H1 (cell line): ENCODE measurements at regions of chr20 and their contacts with region 1.

Region 1: GRCh38 chr20:53208110-53208832 is 236.1 kb downstream of the TSHZ2 start:
- DNase-seq: peak in 1 of 2 experiments; percentile 84
- H3K4me3 ChIP-seq: no peak overlapping the region
- H3K27ac ChIP-seq: no peak overlapping the region
- H3K4me1 ChIP-seq: peaks cover 0 to 14% (median 5%) of the 10 kb centered on the region in 4 experiments; a peak in 6 of 7 replicates
- H3K27me3 ChIP-seq: no peaks in the 10 kb centered on the region
- CTCF ChIP-seq: peak; percentile 64 to 77 (median 74)
- EP300 ChIP-seq: peak in 1 of 2 experiments; percentile 70; a peak in 1 of 3 replicates
- POLR2A ChIP-seq: no peak
- RAD21 ChIP-seq: peak; percentile 63 to 72

Region 2: GRCh38 chr20:53077373-53078205 is 130.7 kb before region 1 on chr20:
- CTCF ChIA-PET with region 1: no interaction called
- POLR2A ChIA-PET with region 1: no interaction called
- DNase-seq: no peak
- H3K4me3 ChIP-seq: no peak overlapping the region
- H3K27ac ChIP-seq: no peak overlapping the region
- H3K4me1 ChIP-seq: no peaks in the 10 kb centered on the region; a peak in 1 of 7 replicates
- H3K27me3 ChIP-seq: no peaks in the 10 kb centered on the region
- CTCF ChIP-seq: no peak
- EP300 ChIP-seq: no peak
- POLR2A ChIP-seq: no peak
- RAD21 ChIP-seq: no peak

Region 3: DNA sequence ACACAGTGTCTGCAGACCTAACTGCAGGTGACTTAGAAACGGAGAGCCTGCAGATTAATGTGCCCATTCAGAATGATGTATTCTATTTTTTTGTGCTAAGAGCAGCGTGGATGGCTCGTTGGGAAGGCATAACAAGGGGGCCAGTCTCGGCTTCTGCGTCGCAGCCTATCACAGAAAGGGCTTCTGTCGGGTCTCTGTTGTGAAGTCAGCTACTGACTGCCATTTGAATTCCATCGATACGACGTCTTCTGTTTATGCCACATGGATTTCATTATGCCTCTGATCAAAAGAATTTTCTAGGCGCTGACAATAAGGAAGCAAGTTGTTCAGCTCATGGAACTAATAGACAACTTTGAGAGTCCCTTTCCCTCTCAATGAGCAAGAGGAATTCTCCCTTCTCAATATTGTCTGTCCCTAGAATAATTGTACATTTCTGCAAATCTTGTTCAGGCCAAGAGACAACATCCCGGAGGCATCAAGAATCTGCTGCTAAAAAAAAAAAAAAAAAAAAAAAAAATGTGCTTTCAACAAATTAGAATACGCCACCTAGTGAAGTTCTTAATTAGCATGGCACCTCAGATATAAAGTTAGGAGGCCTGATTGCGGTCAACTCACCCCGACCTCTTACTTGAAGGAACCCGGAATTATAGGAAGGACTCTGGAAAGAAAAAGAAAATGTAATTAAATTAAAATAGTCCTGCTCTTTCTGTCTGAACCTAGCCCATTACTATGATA is 12.2 kb before region 1 on chr20:
- CTCF ChIA-PET with region 1: interaction called, 24 read pairs
- POLR2A ChIA-PET with region 1: no interaction called
- DNase-seq: no peak
- H3K4me3 ChIP-seq: no peak overlapping the region
- H3K27ac ChIP-seq: no peak overlapping the region
- H3K4me1 ChIP-seq: no peaks in the 10 kb centered on the region
- H3K27me3 ChIP-seq: no peaks in the 10 kb centered on the region
- CTCF ChIP-seq: no peak
- EP300 ChIP-seq: no peak
- POLR2A ChIP-seq: no peak
- RAD21 ChIP-seq: no peak